Endothelial cell of umbilical vein (primary cell): ENCODE measurements at regions of chr6 and their contacts with region 1.

Region 1: DNA sequence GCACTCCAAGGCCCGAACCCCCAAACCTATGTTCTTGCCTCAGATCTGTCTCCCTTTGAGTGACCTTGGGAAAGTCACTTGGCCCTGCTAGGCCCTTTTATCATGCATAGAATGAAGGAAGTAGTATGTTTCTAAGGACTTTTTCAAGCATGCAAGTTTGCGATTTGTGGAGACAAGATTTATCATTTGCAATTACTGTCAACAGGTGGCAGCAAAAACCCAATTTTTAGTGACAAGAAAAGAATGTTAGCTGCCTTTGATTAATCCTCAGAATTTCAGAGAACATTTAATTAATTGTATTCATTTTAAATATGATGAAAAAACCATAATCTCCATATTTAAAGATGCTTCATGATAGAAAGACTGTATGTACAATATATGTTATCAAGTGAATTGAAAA is 28.3 kb upstream of the PREP start:
- DNase-seq: peak; percentile 73
- H3K4me3 ChIP-seq: no peak overlapping the region
- H3K27ac ChIP-seq: peak overlapping the region; percentile 65
- H3K4me1 ChIP-seq: peaks cover 40% of the 10 kb centered on the region
- H3K27me3 ChIP-seq: no peaks in the 10 kb centered on the region
- CTCF ChIP-seq: peak; percentile 30 to 36
- POLR2A ChIP-seq: no peak

Region 2: DNA sequence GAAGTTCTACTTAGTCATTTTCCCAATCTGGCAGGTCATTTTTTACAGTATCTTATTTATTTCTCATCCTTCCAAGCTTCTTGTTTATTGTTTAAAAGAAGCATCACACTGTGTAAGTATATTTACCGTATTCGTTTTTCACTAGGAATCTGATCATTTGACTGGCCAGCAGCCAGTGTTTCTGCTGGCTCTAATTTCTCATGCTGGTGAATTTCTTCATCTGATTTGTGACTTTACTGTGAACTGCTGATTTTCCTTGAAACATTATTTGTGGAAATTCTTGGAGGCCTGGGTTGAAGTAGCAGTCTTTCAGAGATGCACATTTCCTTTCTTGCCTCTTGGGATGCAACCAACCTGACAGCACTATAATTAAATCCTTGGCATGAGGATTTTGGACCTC is 94.2 kb before region 1 on chr6:
- CTCF ChIA-PET with region 1: no interaction called
- POLR2A ChIA-PET with region 1: no interaction called
- dilution Hi-C with region 1: no loop called
- intact Hi-C with region 1: no loop called
- DNase-seq: no peak
- H3K4me3 ChIP-seq: no peak overlapping the region
- H3K27ac ChIP-seq: no peak overlapping the region
- H3K4me1 ChIP-seq: no peaks in the 10 kb centered on the region
- H3K27me3 ChIP-seq: no peaks in the 10 kb centered on the region
- CTCF ChIP-seq: no peak
- POLR2A ChIP-seq: no peak

Region 3: DNA sequence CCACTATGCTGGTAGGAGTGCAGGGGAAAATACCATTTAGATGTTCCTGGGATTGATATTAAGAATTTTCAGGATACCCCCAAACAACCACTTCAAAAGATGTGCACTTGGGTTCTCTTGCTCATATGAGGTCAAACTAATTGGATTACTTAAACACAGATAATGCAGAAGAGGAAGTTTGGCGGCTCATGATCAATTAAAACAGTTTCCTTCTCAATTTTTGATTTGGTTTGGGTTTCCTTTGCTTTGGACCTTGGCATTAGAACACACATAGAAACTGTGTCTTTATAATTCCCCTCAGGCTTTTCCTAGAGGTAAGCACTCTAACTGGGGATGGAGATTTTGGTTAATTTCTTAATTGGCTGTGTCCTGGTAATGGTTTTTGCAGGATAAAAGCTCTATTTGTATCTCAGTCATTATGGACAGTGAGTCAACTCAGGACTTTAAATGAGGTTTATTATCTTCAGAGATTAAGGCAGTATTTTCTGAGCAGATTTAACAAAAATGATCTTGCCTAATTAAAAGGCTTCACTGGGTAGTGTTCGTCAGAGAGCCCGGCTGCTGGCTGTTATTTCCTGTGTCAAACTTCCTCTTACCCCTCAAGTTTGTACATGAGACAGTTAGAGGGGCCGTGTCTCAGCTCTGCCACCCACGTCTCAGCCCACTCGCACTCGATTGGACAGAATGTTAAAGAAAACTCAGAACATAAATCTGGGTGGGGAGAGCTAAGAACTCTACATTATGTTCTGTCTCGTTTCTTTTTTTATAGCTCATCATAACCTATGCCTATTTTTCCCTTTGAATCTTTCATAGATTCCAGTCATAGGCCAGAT is 21.9 kb after region 1 on chr6:
- CTCF ChIA-PET with region 1: interaction called, 33 read pairs
- POLR2A ChIA-PET with region 1: interaction called, 3 read pairs
- dilution Hi-C with region 1: no loop called
- intact Hi-C with region 1: no loop called
- DNase-seq: peak; percentile 6
- H3K4me3 ChIP-seq: no peak overlapping the region
- H3K27ac ChIP-seq: no peak overlapping the region
- H3K4me1 ChIP-seq: peaks cover 8% of the 10 kb centered on the region
- H3K27me3 ChIP-seq: no peaks in the 10 kb centered on the region
- CTCF ChIP-seq: no peak
- POLR2A ChIP-seq: no peak

Region 4: GRCh38 chr6:105500693-105501092 is 69.5 kb after region 1 on chr6:
- CTCF ChIA-PET with region 1: interaction called, 10 read pairs
- POLR2A ChIA-PET with region 1: no interaction called
- dilution Hi-C with region 1: no loop called
- intact Hi-C with region 1: no loop called
- DNase-seq: no peak
- H3K4me3 ChIP-seq: no peak overlapping the region
- H3K27ac ChIP-seq: no peak overlapping the region
- H3K4me1 ChIP-seq: no peaks in the 10 kb centered on the region
- H3K27me3 ChIP-seq: peaks cover 9 to 11% of the 10 kb centered on the region in 2 experiments
- CTCF ChIP-seq: no peak
- POLR2A ChIP-seq: no peak

Region 5: GRCh38 chr6:105726907-105727655 is 295.9 kb after region 1 on chr6:
- CTCF ChIA-PET with region 1: interaction called, 26 read pairs
- POLR2A ChIA-PET with region 1: no interaction called
- dilution Hi-C with region 1: no loop called
- intact Hi-C with region 1: loop called (anchors 1 kb)
- DNase-seq: no peak
- H3K4me3 ChIP-seq: no peak overlapping the region
- H3K27ac ChIP-seq: no peak overlapping the region
- H3K4me1 ChIP-seq: no peaks in the 10 kb centered on the region
- H3K27me3 ChIP-seq: peaks cover 4% of the 10 kb centered on the region in 2 experiments
- CTCF ChIP-seq: no peak
- POLR2A ChIP-seq: no peak

Region 6: GRCh38 chr6:105992315-105992961 is 561.2 kb after region 1 on chr6:
- CTCF ChIA-PET with region 1: interaction called, 21 read pairs
- POLR2A ChIA-PET with region 1: interaction called, 3 read pairs
- dilution Hi-C with region 1: no loop called
- intact Hi-C with region 1: loop called (anchors 2 kb)
- DNase-seq: peak; percentile 76
- H3K4me3 ChIP-seq: peak overlapping the region; percentile 55 to 74 (median 72)
- H3K27ac ChIP-seq: no peak overlapping the region
- H3K4me1 ChIP-seq: peaks cover 22% of the 10 kb centered on the region
- H3K27me3 ChIP-seq: peaks cover 81 to 93% of the 10 kb centered on the region in 2 experiments
- CTCF ChIP-seq: no peak
- POLR2A ChIP-seq: no peak

Region 7: GRCh38 chr6:106223300-106223930 is 792.2 kb after region 1 on chr6:
- CTCF ChIA-PET with region 1: interaction called, 85 read pairs
- POLR2A ChIA-PET with region 1: no interaction called
- dilution Hi-C with region 1: no loop called
- intact Hi-C with region 1: loop called (anchors 1 kb)
- DNase-seq: peak; percentile 75
- H3K4me3 ChIP-seq: no peak overlapping the region
- H3K27ac ChIP-seq: no peak overlapping the region
- H3K4me1 ChIP-seq: no peaks in the 10 kb centered on the region
- H3K27me3 ChIP-seq: no peaks in the 10 kb centered on the region
- CTCF ChIP-seq: peak; percentile 26 to 38
- POLR2A ChIP-seq: no peak